AG04450 (cell line): ENCODE measurements at regions of chr3 and their contacts with region 1.

Region 1: GRCh38 chr3:64533617-64534317 is 154.0 kb downstream of the ADAMTS9 start:
- DNase-seq: peak; percentile 80
- H3K4me3 ChIP-seq: no peak overlapping the region
- H3K27ac ChIP-seq: no peak overlapping the region
- H3K27me3 ChIP-seq: peaks cover 19% of the 10 kb centered on the region
- CTCF ChIP-seq: peak; percentile 91

Region 2: DNA sequence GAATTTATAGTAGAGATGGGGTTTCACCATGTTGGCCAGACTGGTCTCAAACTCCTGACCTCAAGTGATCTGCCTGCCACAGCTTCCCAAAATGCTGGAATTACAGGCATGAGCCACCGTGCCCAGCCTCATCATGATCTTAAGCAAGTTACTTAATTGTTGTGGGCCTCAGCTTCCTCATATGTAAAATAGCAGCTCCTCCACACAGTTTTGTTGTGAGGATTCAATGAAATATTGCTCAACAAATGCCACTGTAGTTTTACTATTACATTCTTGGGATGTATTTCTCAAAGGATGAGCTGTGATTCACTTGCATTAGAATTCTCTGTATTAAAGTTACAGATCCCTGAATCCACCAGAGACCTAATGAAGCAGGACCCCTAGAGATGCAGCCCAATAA is 14.8 kb before region 1 on chr3:
- CTCF ChIA-PET with region 1: interaction called, 107 read pairs
- POLR2A ChIA-PET with region 1: interaction called, 5 read pairs
- DNase-seq: peak; percentile 13
- H3K4me3 ChIP-seq: no peak overlapping the region
- H3K27ac ChIP-seq: no peak overlapping the region
- H3K27me3 ChIP-seq: no peaks in the 10 kb centered on the region
- CTCF ChIP-seq: no peak

Region 3: DNA sequence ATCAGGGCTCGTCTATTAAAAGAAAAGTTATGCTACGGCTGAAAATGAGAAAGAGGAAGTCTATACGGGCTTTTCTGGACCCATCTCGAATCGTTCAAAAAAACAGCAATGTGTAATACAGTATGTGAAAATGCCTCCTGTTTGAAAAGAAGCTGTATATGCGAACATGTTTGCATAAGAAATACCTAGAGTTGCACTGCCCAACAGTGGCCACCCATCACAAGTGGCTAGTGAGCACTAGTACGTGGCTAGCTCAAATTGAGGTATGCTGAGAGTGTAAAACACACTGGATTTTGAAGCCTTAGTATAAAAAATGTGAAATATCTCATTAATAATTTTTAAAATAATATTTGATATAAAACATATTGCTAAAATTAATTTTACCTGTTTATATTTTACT is 123.2 kb after region 1 on chr3:
- CTCF ChIA-PET with region 1: no interaction called
- POLR2A ChIA-PET with region 1: no interaction called
- DNase-seq: no peak
- H3K4me3 ChIP-seq: no peak overlapping the region
- H3K27ac ChIP-seq: no peak overlapping the region
- H3K27me3 ChIP-seq: no peaks in the 10 kb centered on the region
- CTCF ChIP-seq: no peak

Region 4: DNA sequence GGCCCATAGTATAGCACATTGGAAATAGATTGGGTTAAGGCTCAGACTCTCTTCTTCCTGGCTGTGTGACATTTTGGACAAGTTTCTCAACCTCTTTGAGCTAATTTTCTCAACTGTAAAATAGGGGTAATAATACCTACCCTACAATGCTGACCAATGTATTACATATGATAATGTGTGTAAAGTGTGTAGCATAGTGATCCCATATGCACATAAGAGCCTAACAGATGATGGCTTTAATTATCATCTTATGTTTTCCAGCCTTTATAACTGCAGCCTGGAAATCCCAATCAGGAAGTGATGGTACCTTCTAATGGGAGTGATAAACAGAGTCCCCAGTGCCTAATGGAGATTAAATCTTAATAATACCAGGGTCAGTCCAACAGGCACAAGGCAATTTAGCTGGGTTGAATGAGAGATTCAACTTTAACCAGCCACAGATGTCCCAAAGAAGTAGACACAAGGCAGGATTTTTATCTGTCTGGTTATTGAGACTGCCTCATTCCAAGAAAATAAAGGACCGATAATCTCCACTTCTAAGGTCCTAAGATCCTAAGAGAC is 142.0 kb after region 1 on chr3:
- CTCF ChIA-PET with region 1: no interaction called
- POLR2A ChIA-PET with region 1: no interaction called
- DNase-seq: no peak
- H3K4me3 ChIP-seq: no peak overlapping the region
- H3K27ac ChIP-seq: no peak overlapping the region
- H3K27me3 ChIP-seq: no peaks in the 10 kb centered on the region
- CTCF ChIP-seq: no peak

Region 5: GRCh38 chr3:65170390-65171042 is 636.7 kb after region 1 on chr3:
- CTCF ChIA-PET with region 1: interaction called, 12 read pairs
- POLR2A ChIA-PET with region 1: no interaction called
- DNase-seq: peak; percentile 26
- H3K4me3 ChIP-seq: no peak overlapping the region
- H3K27ac ChIP-seq: no peak overlapping the region
- H3K27me3 ChIP-seq: no peaks in the 10 kb centered on the region
- CTCF ChIP-seq: peak; percentile 31; the same call in 1 of the 2 replicates

Region 6: GRCh38 chr3:65230256-65231139 is 696.7 kb after region 1 on chr3:
- CTCF ChIA-PET with region 1: interaction called, 10 read pairs
- POLR2A ChIA-PET with region 1: no interaction called
- DNase-seq: no peak
- H3K4me3 ChIP-seq: no peak overlapping the region
- H3K27ac ChIP-seq: no peak overlapping the region
- H3K27me3 ChIP-seq: peaks cover 2% of the 10 kb centered on the region
- CTCF ChIP-seq: no peak

Region 7: DNA sequence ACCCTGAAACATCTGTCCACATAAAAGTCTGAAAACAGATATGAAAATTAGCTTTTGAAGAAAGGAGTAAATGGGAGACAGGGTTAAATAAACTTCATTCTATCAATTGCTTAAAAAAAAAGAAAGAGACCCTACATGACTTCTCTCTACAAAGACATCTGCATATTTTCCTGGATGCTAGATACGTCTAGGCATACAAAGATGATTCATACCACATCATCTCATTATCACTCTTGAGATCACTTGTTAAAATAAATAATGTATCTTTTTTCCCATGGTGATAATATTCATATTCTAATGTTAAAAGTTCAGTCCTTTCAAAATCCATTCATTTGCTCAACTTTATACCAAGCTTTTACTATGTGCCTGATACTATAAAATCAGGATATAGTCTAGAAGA is 1209.1 kb after region 1 on chr3:
- CTCF ChIA-PET with region 1: interaction called, 10 read pairs
- POLR2A ChIA-PET with region 1: no interaction called
- DNase-seq: no peak
- H3K4me3 ChIP-seq: no peak overlapping the region
- H3K27ac ChIP-seq: no peak overlapping the region
- H3K27me3 ChIP-seq: no peaks in the 10 kb centered on the region
- CTCF ChIP-seq: no peak